Esophagus muscularis mucosa (tissue), 4 donors: ENCODE measurements at regions of chr1 and their contacts with region 1.

Region 1: GRCh38 chr1:78101514-78101913 is 55.7 kb downstream of the GIPC2 start:
- DNase-seq: no peak
- H3K4me3 ChIP-seq: no peak overlapping the region
- H3K27ac ChIP-seq: no peak overlapping the region
- H3K4me1 ChIP-seq: peaks cover 8 to 32% (median 15%) of the 10 kb centered on the region in 4 donors
- H3K27me3 ChIP-seq: no peaks in the 10 kb centered on the region
- CTCF ChIP-seq: no peak
- EP300 ChIP-seq: no peak
- POLR2A ChIP-seq: no peak

Region 2: GRCh38 chr1:77539519-77540142 is 561.9 kb before region 1 on chr1:
- intact Hi-C with region 1: loop called (anchors 10 kb)
- DNase-seq: no peak
- H3K4me3 ChIP-seq: no peak overlapping the region
- H3K27ac ChIP-seq: peak overlapping the region in 3 of 4 donors; percentile 15 to 34 (median 27)
- H3K4me1 ChIP-seq: peaks cover 4 to 10% (median 7%) of the 10 kb centered on the region in 4 donors
- H3K27me3 ChIP-seq: no peaks in the 10 kb centered on the region
- CTCF ChIP-seq: no peak
- EP300 ChIP-seq: no peak
- POLR2A ChIP-seq: no peak

Region 3: DNA sequence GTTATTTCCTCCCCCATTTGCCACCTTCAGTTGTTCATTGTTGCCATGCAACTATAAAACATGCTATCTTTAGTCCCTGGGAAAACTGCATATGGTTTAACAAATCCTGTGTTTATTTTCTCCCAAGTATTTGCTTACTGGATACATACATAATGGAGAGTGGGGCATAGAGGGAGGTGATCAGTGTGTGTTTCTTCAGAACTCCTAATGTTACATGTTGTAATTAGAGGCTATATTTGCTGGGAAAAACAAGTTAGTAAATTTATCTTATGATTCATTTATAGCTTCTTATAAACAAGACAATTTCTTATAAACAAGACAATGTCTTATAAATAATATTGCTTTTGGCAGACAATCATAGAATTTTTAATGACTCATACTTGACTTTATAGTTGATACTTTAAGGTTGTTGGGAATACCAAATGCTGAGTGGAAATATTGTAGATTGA is 63.0 kb before region 1 on chr1:
- intact Hi-C with region 1: no loop called
- DNase-seq: no peak
- H3K4me3 ChIP-seq: no peak overlapping the region
- H3K27ac ChIP-seq: peak overlapping the region in 2 of 4 donors; percentile 1 to 16
- H3K4me1 ChIP-seq: peaks cover 3 to 21% (median 14%) of the 10 kb centered on the region in 4 donors
- H3K27me3 ChIP-seq: no peaks in the 10 kb centered on the region
- CTCF ChIP-seq: no peak
- EP300 ChIP-seq: no peak
- POLR2A ChIP-seq: no peak

Region 4: DNA sequence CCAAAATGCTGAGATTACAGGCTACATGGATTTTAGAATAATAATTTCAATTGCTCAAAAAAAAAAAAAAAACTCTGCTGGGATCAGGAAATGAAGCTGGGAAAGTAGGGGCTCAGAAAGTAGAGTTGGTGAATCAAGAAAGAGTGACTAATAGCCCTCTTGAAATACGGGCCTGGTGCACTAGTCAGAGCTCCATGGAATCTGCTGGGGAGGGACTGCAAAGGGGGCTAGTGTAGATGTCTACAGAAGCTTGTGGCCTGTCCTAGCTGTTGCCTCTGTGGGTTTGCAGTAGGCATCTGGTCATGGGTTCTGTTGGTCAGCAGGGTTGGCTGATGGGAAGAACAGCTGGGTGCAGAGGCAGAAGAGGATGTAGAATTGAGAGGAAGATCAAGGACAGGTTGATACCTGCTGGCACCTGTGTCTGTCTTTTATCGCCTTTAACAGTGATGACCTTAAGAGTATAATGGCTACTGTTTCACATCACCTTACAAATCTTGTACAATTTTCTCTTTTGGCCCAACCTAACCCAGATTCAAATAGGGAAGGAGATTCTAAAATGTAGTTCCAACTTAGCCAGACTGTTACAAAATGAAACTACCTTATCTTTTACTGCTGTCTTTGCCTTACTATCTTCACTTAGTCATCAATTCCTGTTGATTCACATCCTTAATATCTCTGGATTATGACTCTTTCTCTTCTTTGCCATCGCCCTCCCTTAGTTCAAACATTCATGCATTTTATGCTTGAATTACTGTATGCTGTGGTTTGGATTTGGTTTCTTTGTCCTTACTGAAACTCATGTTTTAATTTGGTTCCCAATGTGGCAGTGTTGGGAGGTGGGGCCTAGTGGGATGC is 70.4 kb after region 1 on chr1:
- intact Hi-C with region 1: no loop called
- DNase-seq: no peak
- H3K4me3 ChIP-seq: no peak overlapping the region
- H3K27ac ChIP-seq: no peak overlapping the region
- H3K4me1 ChIP-seq: peaks cover 0 to 4% (median 0%) of the 10 kb centered on the region in 4 donors
- H3K27me3 ChIP-seq: no peaks in the 10 kb centered on the region
- CTCF ChIP-seq: no peak
- EP300 ChIP-seq: no peak
- POLR2A ChIP-seq: no peak